Activated CD4-positive, alpha-beta T cell treated with anti-CD3 and anti-CD28 coated beads for 36 hours (primary cell): ENCODE measurements at regions of chr18 and their contacts with region 1.

Region 1: GRCh38 chr18:51668101-51668500 is 470.6 kb upstream of the MEX3C start:
- DNase-seq: peak; percentile 77
- ATAC-seq: peak; percentile 53
- H3K4me3 Mint-ChIP-seq: no peak overlapping the region
- H3K27ac Mint-ChIP-seq: no peak overlapping the region
- H3K4me1 Mint-ChIP-seq: no peaks in the 10 kb centered on the region
- H3K27me3 Mint-ChIP-seq: peaks cover 16% of the 10 kb centered on the region

Region 2: DNA sequence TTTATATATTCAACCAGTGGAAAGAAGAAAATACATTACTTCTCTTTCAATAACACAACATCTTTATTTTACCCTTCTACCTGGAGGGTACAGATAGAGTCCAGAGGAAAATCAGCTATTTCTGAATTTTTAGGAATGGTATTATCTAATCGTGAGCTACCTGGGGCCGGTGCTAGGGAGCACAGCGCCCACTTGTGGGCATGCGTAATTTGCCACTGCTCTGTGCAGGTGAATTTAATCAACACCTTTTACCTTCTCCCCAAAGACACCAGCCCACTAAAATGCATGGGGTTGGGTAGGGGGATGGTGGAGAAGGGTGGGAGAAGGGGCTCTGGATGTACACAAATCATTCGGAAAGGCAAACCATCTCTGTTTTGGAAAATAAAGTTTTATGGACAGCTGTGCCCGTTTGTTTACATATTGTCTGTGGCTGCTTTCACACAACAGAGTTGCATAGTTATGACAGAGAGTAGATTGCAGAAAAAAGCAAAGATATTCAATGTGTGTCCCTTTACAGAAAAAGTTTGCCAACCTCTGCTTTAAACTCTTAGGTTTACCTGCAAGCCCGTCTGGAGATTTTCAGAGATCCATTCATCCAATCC is 620.4 kb after region 1 on chr18:
- CTCF ChIA-PET with region 1: no interaction called
- POLR2A ChIA-PET with region 1: no interaction called
- intact Hi-C with region 1: loop called (anchors 1 to 5 kb)
- DNase-seq: peak; percentile 58
- ATAC-seq: no peak
- H3K4me3 Mint-ChIP-seq: no peak overlapping the region
- H3K27ac Mint-ChIP-seq: no peak overlapping the region
- H3K4me1 Mint-ChIP-seq: no peaks in the 10 kb centered on the region
- H3K27me3 Mint-ChIP-seq: no peaks in the 10 kb centered on the region

Region 3: DNA sequence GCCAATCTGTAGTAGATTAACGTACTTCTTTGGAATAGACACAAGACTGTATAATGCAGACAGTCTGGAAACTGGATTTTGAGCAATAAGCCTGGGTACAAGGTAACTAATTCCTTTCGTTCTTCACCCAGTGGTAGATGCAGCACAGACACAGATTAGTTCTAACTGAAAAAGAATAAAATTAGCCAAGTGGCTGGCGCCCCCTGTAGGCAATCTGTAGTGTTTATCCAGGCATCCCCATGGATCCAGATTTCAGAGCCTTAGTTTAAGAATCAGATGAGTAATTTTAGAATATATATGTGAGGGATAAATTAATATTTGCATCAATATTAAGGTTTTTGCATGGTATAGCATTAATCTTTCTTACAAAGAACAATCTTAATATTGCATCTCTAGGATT is 1235.8 kb after region 1 on chr18:
- CTCF ChIA-PET with region 1: interaction called, 3 read pairs
- POLR2A ChIA-PET with region 1: no interaction called
- intact Hi-C with region 1: loop called in 1 of 2 experiments (anchors 2 kb)
- DNase-seq: peak; percentile 43
- ATAC-seq: no peak
- H3K4me3 Mint-ChIP-seq: no peak overlapping the region
- H3K27ac Mint-ChIP-seq: no peak overlapping the region
- H3K4me1 Mint-ChIP-seq: no peaks in the 10 kb centered on the region
- H3K27me3 Mint-ChIP-seq: no peaks in the 10 kb centered on the region

Region 4: GRCh38 chr18:53153281-53153680 is 1485.2 kb after region 1 on chr18:
- CTCF ChIA-PET with region 1: no interaction called
- POLR2A ChIA-PET with region 1: no interaction called
- intact Hi-C with region 1: loop called in 1 of 2 experiments (anchors 10 kb)
- DNase-seq: peak; percentile 45
- ATAC-seq: no peak
- H3K4me3 Mint-ChIP-seq: no peak overlapping the region
- H3K27ac Mint-ChIP-seq: no peak overlapping the region
- H3K4me1 Mint-ChIP-seq: no peaks in the 10 kb centered on the region
- H3K27me3 Mint-ChIP-seq: no peaks in the 10 kb centered on the region

Region 5: DNA sequence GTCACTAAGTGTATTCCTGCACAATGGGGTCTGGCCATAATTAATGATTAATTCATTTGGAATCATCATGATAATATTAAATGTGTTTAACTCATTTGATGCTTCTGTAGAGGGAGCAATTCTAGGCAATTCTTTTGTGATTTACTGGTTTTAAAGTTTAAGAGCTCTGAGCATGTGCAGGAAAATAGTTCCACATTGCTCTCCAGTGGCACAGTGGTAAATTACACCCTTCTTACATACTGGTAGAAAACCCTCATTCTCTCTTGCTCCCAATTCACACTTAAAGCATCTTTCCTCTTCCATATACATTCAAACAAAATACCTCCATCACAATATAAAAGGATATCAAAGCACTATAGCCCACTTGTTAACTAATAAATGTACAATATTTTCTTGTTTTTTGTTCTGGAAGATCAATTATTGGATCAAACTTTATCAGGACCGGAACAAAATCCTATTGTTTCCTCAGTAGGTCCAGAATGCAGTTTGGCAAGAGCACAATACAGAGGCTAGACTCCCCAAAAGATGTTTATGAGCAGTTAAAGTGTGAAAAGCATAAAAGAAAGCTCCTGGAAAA is 1712.0 kb after region 1 on chr18:
- CTCF ChIA-PET with region 1: no interaction called
- POLR2A ChIA-PET with region 1: no interaction called
- intact Hi-C with region 1: loop called in 1 of 2 experiments (anchors 1 kb)
- DNase-seq: no peak
- ATAC-seq: no peak
- H3K4me3 Mint-ChIP-seq: no peak overlapping the region
- H3K27ac Mint-ChIP-seq: no peak overlapping the region
- H3K4me1 Mint-ChIP-seq: no peaks in the 10 kb centered on the region
- H3K27me3 Mint-ChIP-seq: no peaks in the 10 kb centered on the region